HepG2 (cell line): ENCODE measurements at regions of chr14 and their contacts with region 1.

Region 1: DNA sequence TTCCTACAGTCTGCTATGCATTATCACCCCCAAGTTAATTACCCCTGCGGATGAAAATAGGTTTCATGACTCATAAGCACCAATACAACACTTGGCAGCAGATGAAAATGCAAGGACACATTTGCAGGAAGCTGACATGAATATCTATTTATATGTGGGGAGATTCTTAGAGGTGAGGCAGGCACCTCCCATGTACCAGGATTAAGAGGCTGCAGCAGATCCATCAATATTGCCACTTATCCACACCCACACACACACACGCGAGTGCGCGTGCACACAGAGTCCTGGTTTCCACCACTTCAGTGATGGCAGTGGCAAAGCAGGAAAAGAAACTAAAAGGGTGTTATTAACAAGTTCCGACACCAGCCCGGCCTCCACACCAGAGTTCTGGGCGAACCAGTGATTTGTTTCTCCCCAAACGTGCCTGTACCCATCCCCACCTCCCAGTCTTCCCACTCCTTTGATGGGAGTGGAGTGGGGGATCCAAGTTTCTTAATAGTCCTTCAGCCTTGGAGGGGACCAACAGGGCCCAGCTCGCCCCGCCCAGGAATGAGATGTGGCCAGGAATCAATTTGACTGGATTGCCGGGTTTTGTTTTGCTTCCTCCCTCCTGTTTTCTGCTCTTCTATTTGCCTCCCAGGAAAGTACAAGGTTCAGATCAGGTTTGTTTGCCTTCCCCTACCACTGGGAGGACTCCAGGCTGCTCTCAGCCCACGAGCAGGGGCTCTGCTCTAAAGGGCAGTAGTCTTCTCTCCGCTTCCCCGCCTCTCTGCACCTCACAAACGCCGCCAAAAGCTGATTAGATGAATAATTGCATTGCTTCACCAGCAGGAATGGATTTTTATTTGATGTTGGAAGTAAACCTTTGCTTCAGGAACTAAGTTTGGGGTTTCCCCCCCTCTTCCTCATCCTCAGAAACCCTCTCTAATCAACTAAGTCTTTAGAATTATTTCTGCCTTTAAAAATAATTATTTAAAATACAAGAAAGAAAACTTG is 5.2 kb downstream of the IRF2BPL start:
- DNase-seq: peak; percentile 97
- ATAC-seq: peak; percentile 92
- H3K4me3 ChIP-seq: peak overlapping the region; percentile 38 to 85 (median 61); a peak in 5 of 6 replicates
- H3K27ac ChIP-seq: peak overlapping the region; percentile 84
- H3K4me1 ChIP-seq: peaks cover 67% of the 10 kb centered on the region
- H3K27me3 ChIP-seq: no peaks in the 10 kb centered on the region
- CTCF ChIP-seq: peak; percentile 54
- EP300 ChIP-seq: peak in 1 of 2 experiments; percentile 70; a peak in 3 of 4 replicates
- POLR2A ChIP-seq: peak; percentile 32 to 34; a peak in 2 of 4 replicates
- RAD21 ChIP-seq: peak; percentile 76

Region 2: DNA sequence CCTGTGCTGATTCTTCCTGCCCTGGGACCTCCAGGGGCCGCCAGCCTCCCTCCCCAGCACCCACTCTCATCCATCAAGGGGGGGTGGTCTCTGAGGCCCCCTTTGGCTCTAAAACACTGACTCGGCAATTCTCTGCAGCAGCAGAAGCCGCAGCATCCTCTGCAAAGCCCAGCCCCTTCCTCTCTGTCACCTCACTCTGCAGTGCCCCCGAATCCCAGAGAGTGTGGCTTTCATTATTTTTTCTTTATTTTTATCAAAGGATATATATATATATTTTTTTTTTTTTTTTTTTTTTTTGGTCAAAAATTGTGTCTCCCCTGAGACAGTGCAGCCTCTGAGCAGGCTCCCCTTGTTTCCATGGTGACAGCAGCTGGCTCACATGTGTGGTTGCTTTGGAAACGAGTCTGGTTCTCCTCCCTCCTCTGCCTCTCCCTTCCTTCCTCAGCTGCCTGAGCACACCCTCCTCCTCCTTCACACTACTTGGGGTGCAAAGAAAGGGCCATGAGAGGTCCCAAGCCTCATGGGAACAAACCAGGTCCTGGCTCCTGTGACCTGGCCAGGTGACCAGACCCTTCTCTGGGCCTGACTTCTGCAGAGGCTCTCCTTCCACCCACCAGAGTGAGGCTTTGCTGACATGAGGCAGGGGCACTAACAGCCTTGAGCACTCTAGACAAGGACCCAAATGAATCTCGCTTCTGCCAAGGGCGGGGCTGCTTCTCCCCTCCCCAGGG is 96.6 kb before region 1 on chr14:
- CTCF ChIA-PET with region 1: no interaction called
- POLR2A ChIA-PET with region 1: no interaction called
- in situ Hi-C with region 1: no loop called
- intact Hi-C with region 1: no loop called
- DNase-seq: no peak
- ATAC-seq: no peak
- H3K4me3 ChIP-seq: no peak overlapping the region
- H3K27ac ChIP-seq: no peak overlapping the region
- H3K4me1 ChIP-seq: peaks cover 24% of the 10 kb centered on the region
- H3K27me3 ChIP-seq: peaks cover 3 to 38% of the 10 kb centered on the region in 2 experiments; a peak in 3 of 5 replicates
- CTCF ChIP-seq: no peak
- EP300 ChIP-seq: no peak
- POLR2A ChIP-seq: no peak
- RAD21 ChIP-seq: no peak

Region 3: GRCh38 chr14:76947078-76947837 is 76.0 kb before region 1 on chr14:
- CTCF ChIA-PET with region 1: no interaction called
- POLR2A ChIA-PET with region 1: interaction called, 13 read pairs
- in situ Hi-C with region 1: no loop called
- intact Hi-C with region 1: loop called (anchors 1 kb)
- DNase-seq: peak; percentile 74
- ATAC-seq: peak; percentile 92
- H3K4me3 ChIP-seq: peak overlapping the region; percentile 12 to 68 (median 27); a peak in 4 of 6 replicates
- H3K27ac ChIP-seq: no peak overlapping the region
- H3K4me1 ChIP-seq: peaks cover 79% of the 10 kb centered on the region
- H3K27me3 ChIP-seq: no peaks in the 10 kb centered on the region
- CTCF ChIP-seq: peak; percentile 82
- EP300 ChIP-seq: no peak
- POLR2A ChIP-seq: no peak
- RAD21 ChIP-seq: peak; percentile 90

Region 4: DNA sequence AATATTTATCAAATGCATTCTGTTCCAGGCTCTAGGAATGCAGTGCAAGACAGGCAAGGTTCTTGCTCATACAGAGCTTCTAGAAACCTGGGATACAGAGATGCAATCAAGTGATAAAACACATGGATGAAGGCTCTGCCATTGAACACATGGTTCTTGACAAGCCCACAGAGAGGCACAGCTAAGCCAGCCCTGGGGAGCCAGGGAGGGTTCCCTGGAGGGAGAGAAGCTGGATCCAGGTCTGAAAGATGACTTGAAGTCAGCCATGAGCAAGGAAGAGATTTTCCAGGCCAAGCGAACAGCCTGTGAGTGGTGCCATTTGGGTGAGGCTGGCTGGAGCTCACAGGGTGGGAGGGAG is 61.0 kb before region 1 on chr14:
- CTCF ChIA-PET with region 1: no interaction called
- POLR2A ChIA-PET with region 1: interaction called, 16 read pairs
- in situ Hi-C with region 1: no loop called
- intact Hi-C with region 1: no loop called
- DNase-seq: no peak
- ATAC-seq: peak; percentile 7; the same call in 2 of the 3 replicates
- H3K4me3 ChIP-seq: peak overlapping the region; percentile 53 to 60 (median 57)
- H3K27ac ChIP-seq: peak overlapping the region; percentile 88
- H3K4me1 ChIP-seq: peaks cover 87% of the 10 kb centered on the region
- H3K27me3 ChIP-seq: no peaks in the 10 kb centered on the region
- CTCF ChIP-seq: no peak
- EP300 ChIP-seq: no peak
- POLR2A ChIP-seq: no peak
- RAD21 ChIP-seq: no peak

Region 5: DNA sequence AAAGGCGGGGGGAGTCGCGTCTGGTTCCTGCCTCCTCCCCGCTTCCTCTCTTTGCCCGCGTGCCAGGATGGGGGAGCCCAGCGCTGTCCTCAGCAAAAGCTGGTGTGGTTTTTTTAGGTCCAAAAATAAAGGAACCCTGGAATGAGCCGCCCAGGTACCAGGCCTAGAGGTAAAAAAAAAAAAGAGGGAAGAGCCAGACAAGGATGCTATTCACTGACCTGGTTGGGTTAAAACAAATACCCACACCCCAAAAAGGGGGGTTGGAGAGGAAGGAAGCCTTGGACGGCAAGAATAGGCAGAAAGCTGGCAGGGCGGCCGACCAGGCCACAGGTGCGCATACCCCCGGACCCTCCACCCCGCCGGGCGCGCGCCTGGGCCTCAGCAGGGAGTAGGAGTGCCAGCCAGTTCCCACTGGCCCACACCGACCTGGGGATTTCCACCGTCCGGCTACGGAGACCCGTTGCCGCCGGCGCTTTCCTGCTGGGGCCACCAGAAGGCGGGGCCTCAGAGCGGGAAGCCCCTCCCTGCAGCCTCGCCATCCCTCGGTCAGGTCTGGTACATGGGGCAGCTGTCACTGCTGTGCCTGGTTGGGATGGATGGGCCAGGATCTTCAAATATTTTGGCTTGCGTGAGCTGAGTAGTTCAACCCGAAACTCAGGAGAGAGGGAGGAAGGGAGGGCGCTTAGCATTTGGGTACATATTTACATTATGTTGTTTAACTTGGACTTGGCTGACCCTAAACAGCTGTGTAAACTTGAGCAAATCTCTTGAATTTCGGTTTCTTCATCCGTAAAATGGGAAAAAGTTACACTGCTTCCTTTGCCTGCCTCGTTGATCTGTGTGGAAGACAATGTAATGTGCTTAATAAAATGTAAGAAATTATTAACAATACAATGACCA is 10.6 kb after region 1 on chr14:
- CTCF ChIA-PET with region 1: no interaction called
- POLR2A ChIA-PET with region 1: interaction called, 10 read pairs
- in situ Hi-C with region 1: no loop called
- intact Hi-C with region 1: no loop called
- DNase-seq: peak; percentile 81
- ATAC-seq: peak; percentile 84
- H3K4me3 ChIP-seq: peak overlapping the region; percentile 54 to 75 (median 55)
- H3K27ac ChIP-seq: peak overlapping the region; percentile 64
- H3K4me1 ChIP-seq: peaks cover 94% of the 10 kb centered on the region
- H3K27me3 ChIP-seq: no peaks in the 10 kb centered on the region
- CTCF ChIP-seq: no peak
- EP300 ChIP-seq: peak in 1 of 2 experiments; percentile 85; a peak in 2 of 4 replicates
- POLR2A ChIP-seq: peak in 1 of 2 experiments; percentile 55; a peak in 2 of 4 replicates
- RAD21 ChIP-seq: peak; percentile 44; the same call in 1 of the 2 replicates

Region 6: GRCh38 chr14:77053046-77053841 is 29.9 kb after region 1 on chr14:
- CTCF ChIA-PET with region 1: interaction called, 15 read pairs
- POLR2A ChIA-PET with region 1: no interaction called
- in situ Hi-C with region 1: no loop called
- intact Hi-C with region 1: loop called (anchors 1 kb)
- DNase-seq: peak; percentile 70
- ATAC-seq: peak; percentile 95
- H3K4me3 ChIP-seq: no peak overlapping the region
- H3K27ac ChIP-seq: no peak overlapping the region
- H3K4me1 ChIP-seq: peaks cover 25% of the 10 kb centered on the region
- H3K27me3 ChIP-seq: peaks cover 0 to 8% of the 10 kb centered on the region in 2 experiments; a peak in 1 of 5 replicates
- CTCF ChIP-seq: peak; percentile 95
- EP300 ChIP-seq: no peak
- POLR2A ChIP-seq: no peak
- RAD21 ChIP-seq: peak; percentile 99